AG04449 (cell line): ENCODE measurements at regions of chr5 and their contacts with region 1.

Region 1: DNA sequence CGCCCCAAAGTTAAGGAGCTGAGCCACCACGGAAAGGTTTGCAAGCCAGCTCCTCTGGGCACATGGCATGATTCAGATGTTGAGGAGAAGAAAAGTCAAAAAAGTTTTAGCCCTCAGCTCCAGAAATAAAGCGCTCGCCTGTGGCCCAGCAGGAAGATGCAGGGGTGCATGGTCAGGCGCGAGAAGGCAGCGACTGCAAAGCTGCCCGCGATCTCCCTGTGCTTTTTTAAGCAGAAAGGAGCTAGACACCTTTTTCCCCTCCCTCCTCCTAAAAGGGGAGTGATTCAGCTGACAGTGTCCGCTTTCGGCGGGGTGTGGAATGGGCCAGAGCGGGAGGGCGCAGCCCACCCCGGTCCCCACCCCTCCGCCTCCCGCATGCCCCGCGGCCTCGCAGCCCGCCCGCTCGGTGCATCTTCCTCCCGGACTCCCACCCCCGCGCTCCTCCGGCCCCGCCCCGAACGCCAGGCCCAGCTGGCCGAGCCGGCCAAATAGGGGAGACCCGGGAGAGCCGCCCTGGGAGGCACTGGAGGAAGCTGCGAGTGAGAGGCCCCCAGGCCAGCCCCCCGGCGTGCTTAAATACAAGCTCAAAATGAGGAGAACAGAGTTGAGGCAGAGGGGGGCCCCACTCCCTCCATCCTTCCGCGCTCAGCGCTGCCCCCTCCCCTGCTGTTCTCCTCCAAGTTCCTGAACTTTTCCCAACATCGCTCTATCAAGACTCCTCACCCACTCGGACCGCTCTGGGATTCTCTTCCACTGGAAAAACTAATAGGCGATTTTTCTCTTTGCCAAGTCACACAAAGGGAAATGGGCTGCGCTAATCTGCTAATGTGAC is at the start of gene ADAMTS12:
- DNase-seq: no peak
- H3K4me3 ChIP-seq: peak within 1 kb of the TSS; percentile 67
- CTCF ChIP-seq: no peak

Region 2: DNA sequence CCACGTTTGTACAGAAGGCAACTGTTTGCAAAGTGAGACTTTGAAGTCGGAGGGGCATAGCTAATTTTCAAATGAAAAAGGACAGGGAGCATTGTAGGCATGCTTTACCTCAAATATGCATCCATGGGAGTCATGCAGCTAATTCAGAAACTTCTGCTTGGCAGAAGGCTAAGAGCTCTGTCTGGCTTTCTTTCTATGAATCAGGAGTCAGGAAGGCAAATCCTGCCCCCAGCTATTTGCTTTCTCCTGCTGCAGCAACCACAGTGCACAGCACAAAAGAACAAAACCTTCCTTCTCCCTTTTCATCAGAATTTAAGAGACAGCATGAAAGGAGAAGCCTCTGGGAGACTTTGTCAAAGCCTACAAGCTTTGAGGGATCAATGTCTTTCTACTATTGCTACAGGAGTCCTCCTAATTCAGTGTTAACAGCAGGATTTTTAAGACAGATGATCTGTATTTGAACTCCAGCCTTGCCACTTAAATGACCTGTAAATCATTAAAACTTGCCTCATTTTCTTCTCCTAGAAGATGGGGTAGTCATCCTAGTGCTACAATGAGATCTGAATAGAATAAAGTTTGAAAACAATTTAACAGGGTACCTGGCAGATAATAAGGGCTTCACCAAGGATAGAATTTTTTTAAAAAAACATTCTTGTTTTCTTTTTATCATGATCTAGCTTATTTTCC is 242.1 kb before region 1 on chr5:
- CTCF ChIA-PET with region 1: no interaction called
- POLR2A ChIA-PET with region 1: interaction called, 11 read pairs
- DNase-seq: peak; percentile 83
- H3K4me3 ChIP-seq: no peak overlapping the region
- CTCF ChIP-seq: no peak